ENCODE measurements at regions of chr4 and their contacts with region 1.

Region 1: GRCh38 chr4:76377911-76378310 is 43.0 kb downstream of the CCDC158 start:
- DNase-seq: peak in 1 of 2 experiments; percentile 63
- H3K4me3 ChIP-seq: no peak overlapping the region
- H3K27ac ChIP-seq: no peak overlapping the region
- H3K4me1 ChIP-seq: peaks cover 3 to 14% (median 8%) of the 10 kb centered on the region in 4 experiments
- H3K27me3 ChIP-seq: no peaks in the 10 kb centered on the region
- CTCF ChIP-seq: peak; percentile 69 to 72 (median 71)
- EP300 ChIP-seq: no peak
- POLR2A ChIP-seq: no peak
- RAD21 ChIP-seq: peak; percentile 79 to 85

Region 2: GRCh38 chr4:76179398-76180318 is 198.3 kb before region 1 on chr4:
- CTCF ChIA-PET with region 1: interaction called, 153 read pairs
- POLR2A ChIA-PET with region 1: interaction called, 4 read pairs
- DNase-seq: peak; percentile 59 to 93
- H3K4me3 ChIP-seq: no peak overlapping the region
- H3K27ac ChIP-seq: no peak overlapping the region
- H3K4me1 ChIP-seq: no peaks in the 10 kb centered on the region
- H3K27me3 ChIP-seq: no peaks in the 10 kb centered on the region
- CTCF ChIP-seq: peak; percentile 77 to 87 (median 86)
- EP300 ChIP-seq: no peak
- POLR2A ChIP-seq: no peak
- RAD21 ChIP-seq: peak; percentile 95

Region 3: DNA sequence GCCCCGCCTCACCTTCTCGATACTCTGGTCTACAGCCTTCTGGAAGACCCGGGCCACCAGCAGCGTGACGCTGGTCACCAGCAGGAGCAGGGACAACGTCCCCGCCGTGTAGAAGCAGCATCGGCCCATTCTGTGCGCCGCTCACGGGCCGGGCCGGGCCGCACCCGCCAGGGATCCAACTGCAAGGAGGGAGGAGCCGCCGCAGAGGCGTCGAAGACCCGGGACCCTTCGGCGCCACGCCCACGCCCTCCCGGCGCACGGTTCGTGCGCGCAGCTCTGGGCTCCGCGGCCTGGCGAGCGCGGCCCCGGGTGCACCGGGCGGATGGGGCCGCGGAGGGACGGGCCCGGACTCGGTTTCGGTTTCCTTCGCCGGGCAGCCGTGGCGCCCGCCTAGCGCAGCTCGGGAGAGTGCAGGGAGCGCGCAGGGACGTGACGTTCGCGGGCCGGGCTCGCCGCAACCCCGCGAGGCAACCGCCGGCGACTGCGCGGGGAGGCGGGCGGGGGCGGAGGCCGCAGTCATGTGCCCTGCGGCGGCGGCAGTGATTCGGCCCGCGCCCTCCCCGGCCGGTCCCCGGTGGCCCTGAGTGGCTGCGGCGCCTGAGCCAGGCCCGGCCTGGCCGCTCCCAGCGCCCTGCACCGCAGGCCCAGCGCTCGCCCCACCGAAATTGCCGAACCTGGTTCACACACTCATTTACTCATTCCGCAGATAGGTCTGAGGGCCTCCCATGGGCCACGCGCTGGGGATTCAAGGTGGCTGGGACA is 164.3 kb before region 1 on chr4 and contains the start of gene SCARB2:
- CTCF ChIA-PET with region 1: interaction called, 15 read pairs
- POLR2A ChIA-PET with region 1: interaction called, 4 read pairs
- DNase-seq: peak in 1 of 2 experiments; percentile 91
- H3K4me3 ChIP-seq: peak within 1 kb of the TSS; percentile 52 to 86 (median 68)
- H3K27ac ChIP-seq: peak within 1 kb of the TSS; percentile 54
- H3K4me1 ChIP-seq: peaks cover 4 to 22% (median 9%) of the 10 kb centered on the region in 4 experiments
- H3K27me3 ChIP-seq: peaks cover 0 to 2% (median 0%) of the 10 kb centered on the region in 4 experiments; a peak in 1 of 7 replicates
- CTCF ChIP-seq: no peak
- EP300 ChIP-seq: no peak
- POLR2A ChIP-seq: peak; percentile 66 to 72; a peak in 2 of 3 replicates
- RAD21 ChIP-seq: 0 out of 4 replicates have a peak, but pooled peaks of 1 of the 2 experiments have one; percentile 0
- total RNA-seq, gene SCARB2: 35.7 and 40.2 TPM in 2 replicates

Region 4: DNA sequence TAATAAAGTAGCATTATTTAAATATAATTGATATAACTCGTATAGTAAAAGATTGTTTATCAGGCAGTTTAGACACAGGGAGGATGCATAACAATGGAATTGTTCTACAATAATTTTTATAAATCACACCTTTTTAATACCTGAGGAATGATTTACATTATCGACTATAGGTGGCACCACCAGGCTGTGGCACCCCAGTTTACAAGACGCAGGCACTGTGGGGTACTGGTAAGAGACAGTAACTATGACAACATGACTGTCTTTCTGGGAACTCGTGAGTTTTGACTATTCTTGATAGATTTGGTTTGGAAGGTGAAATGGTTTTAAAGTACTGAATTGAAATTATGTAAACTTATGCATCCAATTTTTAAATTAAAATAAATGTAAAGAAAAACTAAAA is 98.4 kb before region 1 on chr4:
- CTCF ChIA-PET with region 1: interaction called, 13 read pairs
- POLR2A ChIA-PET with region 1: no interaction called
- DNase-seq: no peak
- H3K4me3 ChIP-seq: no peak overlapping the region
- H3K27ac ChIP-seq: no peak overlapping the region
- H3K4me1 ChIP-seq: no peaks in the 10 kb centered on the region; a peak in 1 of 7 replicates
- H3K27me3 ChIP-seq: peaks cover 0 to 1% (median 0%) of the 10 kb centered on the region in 4 experiments; a peak in 1 of 7 replicates
- CTCF ChIP-seq: peak in 2 of 3 experiments; percentile 6 to 13; a peak in 1 of 4 replicates
- EP300 ChIP-seq: no peak
- POLR2A ChIP-seq: no peak
- RAD21 ChIP-seq: peak; percentile 40 to 57

Region 5: DNA sequence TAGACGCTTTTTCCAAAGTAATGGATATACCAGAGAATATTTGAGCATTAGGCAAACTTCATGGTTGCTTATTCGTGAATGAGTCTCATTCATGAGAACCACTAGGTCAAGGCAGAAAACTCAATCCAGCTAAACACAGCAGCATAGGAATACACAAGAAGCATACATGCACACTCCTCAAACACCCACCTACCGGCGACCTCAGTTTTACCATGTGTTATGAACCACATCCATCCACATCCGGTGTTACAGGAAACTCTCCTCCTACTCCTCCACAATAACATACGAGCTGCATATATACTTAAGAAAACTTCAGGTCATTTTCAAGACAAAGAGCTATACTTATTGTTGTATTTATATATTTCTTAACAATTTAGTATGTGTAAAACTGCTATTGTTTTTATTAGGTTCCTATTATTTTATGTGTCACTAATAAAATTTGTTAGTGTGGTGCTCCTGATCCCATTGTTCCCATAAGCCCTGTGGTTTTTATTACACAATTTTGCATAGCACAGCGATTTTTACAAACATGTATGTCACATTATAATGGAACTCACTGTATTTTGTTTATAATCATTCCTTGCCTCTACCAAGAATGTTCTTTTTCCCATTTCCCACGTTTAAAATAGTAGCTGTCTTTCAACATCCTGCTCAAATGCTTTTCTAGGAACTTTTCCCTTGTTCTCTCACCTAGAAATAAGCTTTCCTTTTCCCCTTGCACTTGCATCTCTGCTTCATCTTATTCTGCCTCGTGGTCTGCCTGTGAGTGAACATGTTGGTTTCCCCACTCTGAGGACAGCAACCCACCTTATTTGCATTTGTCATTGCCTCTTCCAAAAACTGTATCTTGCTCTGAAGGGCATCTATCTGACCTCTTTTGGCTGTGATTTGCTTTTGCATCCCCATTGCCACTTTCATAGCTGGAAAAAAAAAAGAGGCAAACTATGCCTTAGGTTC is 23.1 kb before region 1 on chr4:
- CTCF ChIA-PET with region 1: interaction called, 25 read pairs
- POLR2A ChIA-PET with region 1: no interaction called
- DNase-seq: no peak
- H3K4me3 ChIP-seq: no peak overlapping the region
- H3K27ac ChIP-seq: no peak overlapping the region
- H3K4me1 ChIP-seq: no peaks in the 10 kb centered on the region
- H3K27me3 ChIP-seq: no peaks in the 10 kb centered on the region
- CTCF ChIP-seq: no peak
- EP300 ChIP-seq: no peak
- POLR2A ChIP-seq: no peak
- RAD21 ChIP-seq: no peak

Region 6: DNA sequence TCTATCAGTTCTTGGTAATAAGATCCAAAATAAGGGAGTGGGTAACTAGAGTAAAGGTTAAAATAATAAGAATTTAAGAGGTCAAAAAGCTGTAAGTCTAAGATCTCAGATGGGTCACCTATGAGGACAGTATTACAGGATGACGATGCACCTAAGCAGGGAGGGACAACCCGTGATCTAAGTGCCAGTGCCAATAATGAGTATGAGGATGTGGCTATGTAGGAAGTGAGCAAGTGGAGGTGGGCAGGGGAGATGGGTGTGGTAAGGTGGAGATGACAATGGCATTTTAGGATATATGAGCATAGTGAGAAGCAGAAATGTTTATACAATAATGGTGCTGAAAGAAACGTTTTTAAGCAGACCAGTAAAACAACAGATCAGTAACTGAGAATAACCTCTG is 23.7 kb after region 1 on chr4:
- CTCF ChIA-PET with region 1: interaction called, 22 read pairs
- POLR2A ChIA-PET with region 1: interaction called, 3 read pairs
- DNase-seq: no peak
- H3K4me3 ChIP-seq: no peak overlapping the region
- H3K27ac ChIP-seq: no peak overlapping the region
- H3K4me1 ChIP-seq: peaks cover 0 to 7% (median 4%) of the 10 kb centered on the region in 4 experiments; a peak in 4 of 7 replicates
- H3K27me3 ChIP-seq: no peaks in the 10 kb centered on the region
- CTCF ChIP-seq: no peak
- EP300 ChIP-seq: no peak
- POLR2A ChIP-seq: no peak
- RAD21 ChIP-seq: no peak

Measured in H1 (cell line).